Natural killer cell (primary cell): ENCODE measurements at regions of chr13 and their contacts with region 1.

Region 1: GRCh38 chr13:46168341-46168740 is 13.6 kb downstream of the LCP1 start:
- DNase-seq: peak; percentile 50 to 83
- ATAC-seq: peak; percentile 57 to 84 (median 73)
- H3K4me3 ChIP-seq: no peak overlapping the region
- H3K4me3 Mint-ChIP-seq: peak overlapping the region; percentile 95
- H3K27ac ChIP-seq: peak overlapping the region; percentile 70
- H3K27ac Mint-ChIP-seq: peak overlapping the region; percentile 84 to 96
- H3K4me1 ChIP-seq: peaks cover 69% of the 10 kb centered on the region
- H3K4me1 Mint-ChIP-seq: peaks cover 93 to 94% of the 10 kb centered on the region in 2 donors
- H3K27me3 ChIP-seq: no peaks in the 10 kb centered on the region
- H3K27me3 Mint-ChIP-seq: no peaks in the 10 kb centered on the region
- CTCF ChIP-seq: no peak

Region 2: DNA sequence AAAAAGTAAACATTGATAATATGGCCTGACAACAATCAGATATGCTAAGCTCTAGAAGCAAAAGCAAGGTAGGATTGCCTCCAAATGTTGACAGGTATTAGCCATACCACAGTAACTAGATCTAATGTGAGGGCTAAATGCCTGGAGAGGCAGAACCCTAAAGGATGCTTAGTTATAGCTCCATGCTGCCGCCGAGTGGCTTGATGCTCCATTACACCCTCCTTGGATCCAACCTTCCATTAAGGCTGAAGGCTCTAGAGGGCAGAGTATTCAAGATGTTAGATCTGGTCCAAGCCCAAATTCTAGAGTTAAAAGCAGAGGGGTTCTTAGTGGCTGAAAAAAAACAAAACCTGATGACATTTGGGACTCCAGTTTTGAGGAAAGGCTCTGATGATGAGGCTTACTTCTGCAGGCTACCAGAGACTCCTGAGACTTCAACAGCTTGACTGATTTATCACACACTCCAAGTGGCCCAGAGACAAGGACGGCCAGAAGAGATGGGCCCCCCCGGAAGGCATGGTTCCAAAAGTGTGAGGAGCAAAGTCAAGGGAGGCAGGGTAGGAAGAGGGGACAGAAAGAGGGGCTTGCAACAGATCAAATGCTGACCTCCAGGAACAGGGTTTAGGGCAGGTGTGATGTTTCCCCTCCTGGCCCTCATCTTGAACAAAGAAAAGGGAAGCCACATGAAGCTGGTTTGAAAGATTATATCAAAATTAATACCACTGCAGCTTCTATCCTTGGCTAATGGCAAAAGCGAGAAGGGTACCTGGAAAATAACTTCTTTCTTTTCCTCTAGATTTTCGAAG is 41.6 kb before region 1 on chr13:
- intact Hi-C with region 1: loop called (anchors 5 kb)
- DNase-seq: peak; percentile 62 to 86
- ATAC-seq: peak; percentile 89 to 92 (median 91)
- H3K4me3 ChIP-seq: no peak overlapping the region
- H3K4me3 Mint-ChIP-seq: no peak overlapping the region
- H3K27ac ChIP-seq: peak overlapping the region; percentile 21
- H3K27ac Mint-ChIP-seq: peak overlapping the region; percentile 88 to 90
- H3K4me1 ChIP-seq: peaks cover 9% of the 10 kb centered on the region
- H3K4me1 Mint-ChIP-seq: peaks cover 51 to 55% of the 10 kb centered on the region in 2 donors
- H3K27me3 ChIP-seq: no peaks in the 10 kb centered on the region
- H3K27me3 Mint-ChIP-seq: no peaks in the 10 kb centered on the region
- CTCF ChIP-seq: peak; percentile 69

Region 3: DNA sequence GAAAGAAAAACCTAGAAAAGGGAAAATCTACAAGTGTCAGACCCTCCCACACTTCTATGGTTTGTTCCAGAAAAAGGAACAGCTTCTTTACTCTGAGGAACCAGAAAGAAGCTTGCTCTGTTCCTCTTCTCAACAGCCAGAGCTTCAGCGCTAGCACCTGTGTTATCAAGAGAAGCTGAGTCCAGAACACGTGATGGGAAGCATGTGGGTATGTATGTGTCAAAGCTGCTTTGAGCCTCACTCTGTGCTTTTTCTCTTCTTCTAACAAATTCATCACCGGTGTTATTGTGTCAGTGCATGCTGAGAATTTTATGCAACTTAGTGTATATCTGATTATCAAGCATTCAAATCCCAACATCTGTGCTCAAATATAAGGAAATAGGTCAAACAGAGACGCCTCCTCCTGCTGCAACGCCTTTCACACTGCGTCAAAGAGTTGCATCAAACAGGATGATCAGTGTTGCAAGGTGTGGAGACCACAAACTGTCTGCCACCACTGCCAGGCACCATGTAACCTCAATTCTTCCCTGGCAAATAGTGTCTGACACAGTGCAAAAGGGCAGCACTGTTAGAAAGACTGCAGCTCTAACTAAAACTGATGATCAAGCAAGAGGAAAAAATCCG is 127.3 kb after region 1 on chr13:
- intact Hi-C with region 1: loop called (anchors 1 kb)
- DNase-seq: peak; percentile 68 to 92
- ATAC-seq: peak; percentile 80 to 94 (median 91)
- H3K4me3 ChIP-seq: no peak overlapping the region
- H3K4me3 Mint-ChIP-seq: peak overlapping the region; percentile 79
- H3K27ac ChIP-seq: peak overlapping the region; percentile 83
- H3K27ac Mint-ChIP-seq: peak overlapping the region; percentile 88 to 97
- H3K4me1 ChIP-seq: peaks cover 29% of the 10 kb centered on the region
- H3K4me1 Mint-ChIP-seq: peaks cover 39 to 40% of the 10 kb centered on the region in 2 donors
- H3K27me3 ChIP-seq: no peaks in the 10 kb centered on the region
- H3K27me3 Mint-ChIP-seq: no peaks in the 10 kb centered on the region
- CTCF ChIP-seq: no peak